Ascending aorta (tissue), 2 donors: ENCODE measurements at regions of chr2 and their contacts with region 1.

Region 1: DNA sequence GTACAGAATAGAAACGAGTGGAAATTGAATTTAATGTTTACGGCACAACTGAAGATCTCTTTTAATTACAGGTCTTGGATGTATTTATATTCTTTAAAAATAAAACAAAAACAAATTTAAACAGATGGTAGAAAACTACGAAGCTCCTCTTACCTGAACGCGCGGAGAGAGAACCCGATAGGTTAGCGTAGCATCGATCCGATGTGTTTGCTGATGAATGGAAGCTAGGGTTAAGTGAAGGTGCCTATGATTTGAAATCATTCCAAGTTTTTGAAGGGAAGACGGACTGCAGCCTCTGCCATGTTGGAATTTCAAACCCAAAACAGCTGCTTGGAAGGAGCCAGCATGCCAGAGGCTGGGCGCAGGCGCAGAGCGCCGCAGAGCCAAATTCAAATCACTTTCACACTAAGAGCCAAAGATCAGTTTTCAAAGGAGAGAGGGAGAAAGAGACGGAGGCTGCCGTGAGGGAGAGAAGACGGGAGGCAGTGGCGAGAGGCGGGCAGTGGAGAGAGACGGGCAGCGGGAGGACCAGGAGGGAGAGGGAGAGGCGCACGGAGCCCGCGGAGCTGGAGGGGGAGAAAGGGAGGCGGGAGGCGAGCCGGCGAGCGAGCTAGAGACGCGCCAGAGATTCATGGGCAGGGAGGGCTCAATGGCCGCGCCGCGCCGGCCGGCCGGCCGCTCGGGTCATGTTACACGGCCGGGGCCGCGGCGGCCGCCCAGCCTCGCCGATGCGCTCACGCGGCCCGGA is at the start of gene FIGN:
- DNase-seq: peak; percentile 22 to 89
- H3K4me3 ChIP-seq: peak within 1 kb of the TSS; percentile 77 to 96
- H3K27ac ChIP-seq: peak within 1 kb of the TSS; percentile 96 to 99
- H3K4me1 ChIP-seq: peaks cover 0 to 2% of the 10 kb centered on the region in 2 donors
- H3K27me3 ChIP-seq: no peaks in the 10 kb centered on the region
- CTCF ChIP-seq: no peak
- total RNA-seq, gene FIGN: 4.3 TPM

Region 2: DNA sequence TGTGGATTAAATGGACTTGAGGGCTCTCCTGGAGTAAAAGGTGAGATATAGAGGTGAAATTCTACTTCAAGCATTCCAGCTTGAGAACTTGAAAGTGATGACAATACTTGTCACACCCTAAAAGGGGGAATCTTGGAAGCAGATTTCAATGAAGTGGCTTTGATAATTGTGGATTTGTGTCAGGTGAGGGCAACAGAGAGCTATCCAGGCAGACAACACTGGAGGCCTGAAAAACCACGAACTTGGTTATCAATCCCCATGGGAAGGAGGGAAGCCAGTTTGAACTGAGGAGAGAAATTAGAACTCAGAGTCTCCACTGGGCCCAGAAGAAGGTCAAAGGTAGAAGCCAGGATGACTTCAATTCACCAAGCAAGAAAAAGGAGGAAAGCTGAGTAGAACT is 263.9 kb before region 1 on chr2:
- intact Hi-C with region 1: loop called (anchors 10 kb)
- DNase-seq: no peak
- H3K4me3 ChIP-seq: no peak overlapping the region
- H3K27ac ChIP-seq: no peak overlapping the region
- H3K4me1 ChIP-seq: no peaks in the 10 kb centered on the region
- H3K27me3 ChIP-seq: no peaks in the 10 kb centered on the region
- CTCF ChIP-seq: peak in 1 of 3 experiments; percentile 30

Region 3: DNA sequence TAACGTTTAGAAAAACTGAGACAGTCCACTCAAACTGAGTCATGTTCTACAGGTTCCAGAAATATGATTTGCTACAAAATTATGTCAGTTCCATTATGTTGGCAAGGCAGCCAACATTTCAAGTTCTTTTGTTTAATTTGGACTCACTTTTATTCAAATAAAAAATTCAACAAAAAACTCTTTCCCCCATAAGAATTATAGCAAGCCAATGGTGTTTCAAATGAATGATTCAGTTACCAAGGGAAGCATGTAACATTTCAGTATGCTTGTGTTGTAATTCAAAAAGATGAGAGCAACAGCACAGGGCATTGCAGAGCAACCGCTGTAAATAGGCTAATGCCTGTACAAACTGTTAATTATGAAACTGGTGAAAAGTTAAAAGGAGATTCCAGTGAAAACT is 140.8 kb before region 1 on chr2:
- intact Hi-C with region 1: loop called (anchors 5 kb)
- DNase-seq: no peak
- H3K4me3 ChIP-seq: no peak overlapping the region
- H3K27ac ChIP-seq: no peak overlapping the region
- H3K4me1 ChIP-seq: no peaks in the 10 kb centered on the region
- H3K27me3 ChIP-seq: no peaks in the 10 kb centered on the region
- CTCF ChIP-seq: no peak

Region 4: GRCh38 chr2:163604941-163605555 is 130.8 kb before region 1 on chr2:
- intact Hi-C with region 1: no loop called
- DNase-seq: no peak
- H3K4me3 ChIP-seq: no peak overlapping the region
- H3K27ac ChIP-seq: no peak overlapping the region
- H3K4me1 ChIP-seq: no peaks in the 10 kb centered on the region
- H3K27me3 ChIP-seq: no peaks in the 10 kb centered on the region
- CTCF ChIP-seq: no peak

Region 5: DNA sequence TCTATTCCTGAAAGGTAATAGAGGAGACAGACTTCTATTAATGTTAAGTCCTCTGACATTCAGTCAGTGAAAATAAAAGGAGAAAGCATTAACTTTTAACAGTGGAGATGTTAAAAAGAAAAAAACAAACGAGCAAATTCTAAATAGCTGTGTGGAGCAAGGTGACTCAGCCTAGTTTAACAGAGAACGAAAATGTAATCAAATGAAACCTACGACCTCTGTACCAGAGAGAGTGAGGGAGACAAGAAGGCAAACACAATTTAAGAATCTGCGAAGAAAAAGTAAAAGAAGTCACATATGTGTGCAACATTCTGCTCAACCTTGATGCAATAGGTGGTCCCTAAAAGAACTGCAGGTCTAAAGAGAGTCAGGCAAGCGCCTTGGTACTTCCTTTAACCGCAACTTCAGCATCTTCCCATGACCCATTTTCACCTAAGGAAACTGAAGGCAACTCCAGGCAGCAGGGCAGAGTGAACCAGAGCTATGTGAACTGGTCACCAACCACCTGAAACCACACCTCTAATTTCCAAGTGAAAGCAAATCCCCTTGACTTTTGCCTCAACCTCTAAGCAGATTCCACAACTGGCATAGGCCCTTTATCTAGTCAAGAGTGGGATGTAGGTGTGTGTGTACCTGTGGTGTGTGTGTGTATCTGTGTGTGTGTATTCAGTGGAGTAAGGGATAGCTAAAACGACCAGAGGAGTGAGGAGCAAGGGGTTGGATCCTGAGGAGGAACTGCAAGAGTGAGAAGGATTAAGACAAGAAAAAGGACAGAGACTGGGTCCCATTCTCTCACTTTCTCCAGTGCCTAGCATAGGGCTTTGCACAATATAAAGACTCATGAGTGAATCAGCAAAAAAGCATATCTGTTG is 43.0 kb before region 1 on chr2:
- intact Hi-C with region 1: loop called (anchors 2 kb)
- DNase-seq: no peak
- H3K4me3 ChIP-seq: peak overlapping the region in 1 of 2 donors; percentile 23
- H3K27ac ChIP-seq: peak overlapping the region; percentile 66 to 80
- H3K4me1 ChIP-seq: peaks cover 4 to 42% of the 10 kb centered on the region in 2 donors
- H3K27me3 ChIP-seq: no peaks in the 10 kb centered on the region
- CTCF ChIP-seq: no peak

Region 6: GRCh38 chr2:163771601-163772000 is 35.7 kb after region 1 on chr2:
- intact Hi-C with region 1: loop called (anchors 2 kb)
- DNase-seq: no peak
- H3K4me3 ChIP-seq: no peak overlapping the region
- H3K27ac ChIP-seq: no peak overlapping the region
- H3K4me1 ChIP-seq: peaks cover 0 to 9% of the 10 kb centered on the region in 2 donors
- H3K27me3 ChIP-seq: no peaks in the 10 kb centered on the region
- CTCF ChIP-seq: no peak

Region 7: DNA sequence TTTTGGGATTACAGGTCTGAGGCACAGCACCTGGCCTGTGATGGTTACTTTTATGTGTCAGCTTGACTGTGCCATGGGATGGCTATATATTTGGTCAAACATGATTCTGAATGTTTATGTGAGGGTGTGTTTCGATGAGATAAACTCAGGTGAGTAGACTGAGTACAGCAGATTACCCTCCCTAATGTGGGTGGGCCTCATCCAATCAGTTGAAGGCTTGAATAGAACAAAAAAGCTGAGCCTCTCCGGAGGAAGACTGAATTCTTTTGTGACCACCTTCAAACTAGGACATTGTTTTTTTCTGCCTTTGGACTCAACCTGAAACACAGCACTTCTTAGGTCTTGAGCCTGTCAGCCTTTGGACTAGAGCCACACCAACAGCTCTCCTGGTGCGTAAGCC is 49.3 kb after region 1 on chr2:
- intact Hi-C with region 1: no loop called
- DNase-seq: no peak
- H3K4me3 ChIP-seq: no peak overlapping the region
- H3K27ac ChIP-seq: no peak overlapping the region
- H3K4me1 ChIP-seq: no peaks in the 10 kb centered on the region
- H3K27me3 ChIP-seq: no peaks in the 10 kb centered on the region
- CTCF ChIP-seq: no peak

Region 8: DNA sequence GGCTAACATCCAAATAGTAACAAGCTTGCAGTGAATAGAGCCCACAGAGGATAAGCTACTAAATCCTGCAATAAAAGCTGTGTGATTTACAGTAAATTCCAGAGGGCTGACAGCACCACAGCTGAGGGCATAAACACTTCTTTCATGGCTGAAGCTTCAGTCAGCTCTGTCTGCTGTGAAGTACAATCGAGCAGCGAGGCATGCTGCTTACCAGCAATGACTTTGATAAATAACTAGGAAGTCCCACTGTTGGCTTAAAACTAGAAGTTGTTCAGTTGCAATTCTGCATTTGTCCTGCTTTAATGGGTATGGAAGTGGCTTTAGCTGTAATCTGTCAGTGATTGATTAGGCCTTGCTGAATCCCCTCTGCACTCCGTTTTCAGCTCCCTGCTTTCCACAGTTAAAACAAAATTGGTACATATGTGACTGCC is 65.1 kb after region 1 on chr2:
- intact Hi-C with region 1: no loop called
- DNase-seq: no peak
- H3K4me3 ChIP-seq: no peak overlapping the region
- H3K27ac ChIP-seq: no peak overlapping the region
- H3K4me1 ChIP-seq: no peaks in the 10 kb centered on the region
- H3K27me3 ChIP-seq: no peaks in the 10 kb centered on the region
- CTCF ChIP-seq: no peak

Region 9: DNA sequence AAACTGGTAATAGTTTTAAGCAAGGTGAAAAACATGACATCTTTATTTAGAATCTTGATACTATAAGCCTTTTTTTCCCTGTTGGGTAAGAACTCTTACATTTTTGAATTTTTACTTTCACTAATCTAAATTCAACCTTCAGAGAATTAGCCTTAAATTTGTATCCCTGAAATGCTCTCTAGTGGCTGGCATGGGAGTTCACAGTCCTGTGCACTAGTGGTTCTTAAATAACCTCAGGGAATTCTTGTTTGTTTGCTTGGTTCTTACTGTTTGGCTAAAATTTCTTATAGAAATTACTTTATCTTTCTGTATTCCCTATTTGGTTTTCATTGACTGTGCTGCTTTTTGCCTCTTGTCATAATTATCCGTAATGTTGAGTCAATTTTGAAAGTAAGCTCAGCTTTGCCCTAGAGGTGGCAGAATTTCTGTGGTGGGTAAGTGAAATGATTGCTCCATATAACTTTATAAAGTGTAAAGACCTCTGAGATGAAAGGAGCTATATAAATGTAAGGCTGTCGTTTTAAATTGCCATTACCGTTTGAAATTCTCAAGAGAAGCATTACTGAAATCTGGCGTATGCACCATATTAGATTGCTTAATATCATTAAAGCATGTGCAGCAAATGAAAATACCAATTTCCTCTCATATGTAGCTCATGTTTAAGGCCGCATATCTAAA is 391.2 kb after region 1 on chr2:
- intact Hi-C with region 1: loop called (anchors 10 kb)
- DNase-seq: no peak
- H3K4me3 ChIP-seq: no peak overlapping the region
- H3K27ac ChIP-seq: no peak overlapping the region
- H3K4me1 ChIP-seq: no peaks in the 10 kb centered on the region
- H3K27me3 ChIP-seq: no peaks in the 10 kb centered on the region
- CTCF ChIP-seq: peak in 2 of 3 experiments; percentile 32 to 60

Region 10: GRCh38 chr2:164145093-164145987 is 409.5 kb after region 1 on chr2:
- intact Hi-C with region 1: no loop called
- DNase-seq: no peak
- H3K4me3 ChIP-seq: no peak overlapping the region
- H3K27ac ChIP-seq: no peak overlapping the region
- H3K4me1 ChIP-seq: no peaks in the 10 kb centered on the region
- H3K27me3 ChIP-seq: no peaks in the 10 kb centered on the region
- CTCF ChIP-seq: no peak